ENCODE measurements at regions of chr12 and their contacts with region 1.

Region 1: DNA sequence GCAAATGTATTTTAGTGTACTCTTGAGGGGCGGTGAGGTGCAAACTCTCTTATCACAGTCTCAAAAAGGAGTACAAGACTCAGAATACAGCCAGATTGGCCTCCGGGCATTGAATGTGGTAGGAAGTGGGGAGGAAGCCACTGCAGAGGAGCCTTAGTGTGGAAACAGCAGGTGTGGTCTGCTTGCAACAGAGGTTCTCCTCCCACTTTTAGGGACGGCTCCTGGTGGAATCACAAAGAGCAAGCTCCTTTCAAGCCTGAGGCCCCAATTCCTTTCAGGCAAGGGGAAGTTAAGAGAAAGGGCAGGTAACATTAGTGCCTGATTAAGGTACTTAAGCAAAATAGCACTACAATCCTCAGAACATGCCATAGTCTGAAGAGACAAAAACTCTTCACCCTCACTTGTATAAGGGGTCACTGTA is 23.7 kb upstream of the SLC2A3 start:
- DNase-seq: peak; percentile 71
- H3K4me3 Mint-ChIP-seq: peak overlapping the region; percentile 86
- H3K27ac Mint-ChIP-seq: peak overlapping the region; percentile 88
- H3K4me1 Mint-ChIP-seq: peaks cover 48% of the 10 kb centered on the region
- H3K27me3 Mint-ChIP-seq: no peaks in the 10 kb centered on the region

Region 2: GRCh38 chr12:7656121-7656520 is 303.6 kb before region 1 on chr12:
- CTCF ChIA-PET with region 1: no interaction called
- POLR2A ChIA-PET with region 1: no interaction called
- DNase-seq: no peak
- H3K4me3 Mint-ChIP-seq: no peak overlapping the region
- H3K27ac Mint-ChIP-seq: no peak overlapping the region
- H3K4me1 Mint-ChIP-seq: no peaks in the 10 kb centered on the region
- H3K27me3 Mint-ChIP-seq: peaks cover 3% of the 10 kb centered on the region

Region 3: DNA sequence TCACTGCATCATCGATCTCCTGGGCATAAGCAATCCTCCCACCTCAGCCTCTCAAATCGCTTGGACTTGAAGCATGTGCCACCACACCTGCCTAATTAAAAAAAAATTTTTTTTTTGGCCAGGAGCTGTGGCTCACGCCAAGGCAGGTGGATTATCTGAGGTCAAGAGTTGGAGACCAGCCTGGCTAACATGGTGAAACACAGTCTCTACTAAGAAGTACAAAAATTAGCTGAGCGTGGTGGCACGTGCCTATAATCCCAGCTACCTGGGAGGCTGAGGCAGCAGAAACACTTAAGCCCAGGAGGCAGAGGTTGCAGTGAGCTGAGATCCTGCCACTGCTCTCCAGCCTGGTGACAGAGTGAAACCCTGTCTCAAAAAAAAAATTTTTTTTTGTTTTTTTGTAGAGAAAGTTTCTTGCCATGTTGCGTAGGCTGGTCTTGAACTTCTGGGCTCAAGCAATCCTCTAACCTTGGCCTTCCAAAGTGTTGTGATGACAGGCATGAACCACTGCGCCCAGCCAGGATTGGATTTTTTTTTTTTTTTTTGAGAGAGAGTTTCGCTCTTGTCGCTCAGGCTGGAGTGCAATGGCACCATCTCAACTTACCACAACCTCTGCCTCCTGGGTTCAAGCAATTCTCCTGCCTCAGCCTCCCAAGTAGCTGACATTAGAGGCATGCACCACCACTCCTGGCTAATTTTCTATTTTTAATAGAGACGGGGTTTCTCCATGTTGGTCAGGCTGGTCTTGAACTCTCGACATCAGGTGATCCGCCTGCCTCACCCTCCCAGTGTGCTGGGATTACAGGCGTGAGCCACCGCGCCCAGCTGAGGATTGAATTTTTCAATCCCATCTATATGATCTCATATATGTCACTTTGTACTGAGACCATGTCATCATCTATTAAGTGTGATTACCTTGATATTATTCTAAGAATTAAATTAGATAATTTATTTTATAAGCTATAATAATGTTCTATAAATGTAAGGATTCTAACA is 36.2 kb before region 1 on chr12:
- CTCF ChIA-PET with region 1: no interaction called
- POLR2A ChIA-PET with region 1: interaction called, 11 read pairs
- DNase-seq: no peak
- H3K4me3 Mint-ChIP-seq: no peak overlapping the region
- H3K27ac Mint-ChIP-seq: no peak overlapping the region
- H3K4me1 Mint-ChIP-seq: peaks cover 61% of the 10 kb centered on the region
- H3K27me3 Mint-ChIP-seq: no peaks in the 10 kb centered on the region

Region 4: GRCh38 chr12:7947011-7947699 is 12.6 kb before region 1 on chr12:
- CTCF ChIA-PET with region 1: interaction called, 3 read pairs
- POLR2A ChIA-PET with region 1: interaction called, 18 read pairs
- DNase-seq: no peak
- H3K4me3 Mint-ChIP-seq: no peak overlapping the region
- H3K27ac Mint-ChIP-seq: no peak overlapping the region
- H3K4me1 Mint-ChIP-seq: peaks cover 5% of the 10 kb centered on the region
- H3K27me3 Mint-ChIP-seq: no peaks in the 10 kb centered on the region

Region 5: GRCh38 chr12:7970475-7971252 is 11.0 kb after region 1 on chr12:
- CTCF ChIA-PET with region 1: interaction called, 44 read pairs
- POLR2A ChIA-PET with region 1: interaction called, 88 read pairs
- DNase-seq: peak; percentile 89
- H3K4me3 Mint-ChIP-seq: peak overlapping the region; percentile 84
- H3K27ac Mint-ChIP-seq: peak overlapping the region; percentile 100
- H3K4me1 Mint-ChIP-seq: peaks cover 39% of the 10 kb centered on the region
- H3K27me3 Mint-ChIP-seq: no peaks in the 10 kb centered on the region

Region 6: DNA sequence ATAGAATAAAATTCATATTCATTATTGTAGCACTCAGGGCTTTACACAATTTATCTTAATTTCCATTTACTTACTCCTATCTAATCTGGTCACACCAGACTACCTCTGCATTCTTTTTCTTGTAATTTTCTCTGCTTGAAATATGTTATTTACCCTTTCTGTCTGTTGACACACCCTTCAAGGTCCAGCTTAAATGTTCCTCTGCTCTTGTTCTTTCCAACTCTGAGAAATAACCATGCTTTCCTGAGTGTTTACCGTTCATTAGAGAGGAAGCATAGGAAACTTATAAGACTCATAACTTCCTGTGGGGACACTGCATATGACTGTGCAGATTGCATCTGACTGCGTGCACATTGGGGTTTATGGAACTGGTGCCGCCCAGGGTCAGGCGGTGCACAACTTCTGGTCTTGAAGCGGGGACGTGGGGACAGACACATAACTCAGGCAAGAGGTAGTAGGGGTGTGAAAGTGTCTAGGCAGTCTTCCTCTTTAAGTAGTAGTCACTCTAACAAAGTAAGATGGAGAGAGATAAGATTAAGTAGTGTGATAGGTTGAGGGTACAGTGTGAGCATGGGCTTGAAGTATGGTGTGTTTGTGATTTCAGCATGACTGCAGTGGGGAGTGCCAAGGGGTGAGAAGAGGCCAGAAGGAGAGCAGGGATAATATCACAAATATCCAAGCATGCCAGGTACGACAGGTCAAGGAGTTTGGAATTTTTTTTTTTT is 30.3 kb after region 1 on chr12:
- CTCF ChIA-PET with region 1: interaction called, 30 read pairs
- POLR2A ChIA-PET with region 1: interaction called, 38 read pairs
- DNase-seq: peak; percentile 88
- H3K4me3 Mint-ChIP-seq: peak overlapping the region; percentile 65
- H3K27ac Mint-ChIP-seq: peak overlapping the region; percentile 86
- H3K4me1 Mint-ChIP-seq: peaks cover 56% of the 10 kb centered on the region
- H3K27me3 Mint-ChIP-seq: no peaks in the 10 kb centered on the region

Region 7: GRCh38 chr12:7995266-7995963 is 35.7 kb after region 1 on chr12:
- CTCF ChIA-PET with region 1: interaction called, 30 read pairs
- POLR2A ChIA-PET with region 1: interaction called, 38 read pairs
- DNase-seq: peak; percentile 84
- H3K4me3 Mint-ChIP-seq: no peak overlapping the region
- H3K27ac Mint-ChIP-seq: no peak overlapping the region
- H3K4me1 Mint-ChIP-seq: peaks cover 26% of the 10 kb centered on the region
- H3K27me3 Mint-ChIP-seq: no peaks in the 10 kb centered on the region

Region 8: DNA sequence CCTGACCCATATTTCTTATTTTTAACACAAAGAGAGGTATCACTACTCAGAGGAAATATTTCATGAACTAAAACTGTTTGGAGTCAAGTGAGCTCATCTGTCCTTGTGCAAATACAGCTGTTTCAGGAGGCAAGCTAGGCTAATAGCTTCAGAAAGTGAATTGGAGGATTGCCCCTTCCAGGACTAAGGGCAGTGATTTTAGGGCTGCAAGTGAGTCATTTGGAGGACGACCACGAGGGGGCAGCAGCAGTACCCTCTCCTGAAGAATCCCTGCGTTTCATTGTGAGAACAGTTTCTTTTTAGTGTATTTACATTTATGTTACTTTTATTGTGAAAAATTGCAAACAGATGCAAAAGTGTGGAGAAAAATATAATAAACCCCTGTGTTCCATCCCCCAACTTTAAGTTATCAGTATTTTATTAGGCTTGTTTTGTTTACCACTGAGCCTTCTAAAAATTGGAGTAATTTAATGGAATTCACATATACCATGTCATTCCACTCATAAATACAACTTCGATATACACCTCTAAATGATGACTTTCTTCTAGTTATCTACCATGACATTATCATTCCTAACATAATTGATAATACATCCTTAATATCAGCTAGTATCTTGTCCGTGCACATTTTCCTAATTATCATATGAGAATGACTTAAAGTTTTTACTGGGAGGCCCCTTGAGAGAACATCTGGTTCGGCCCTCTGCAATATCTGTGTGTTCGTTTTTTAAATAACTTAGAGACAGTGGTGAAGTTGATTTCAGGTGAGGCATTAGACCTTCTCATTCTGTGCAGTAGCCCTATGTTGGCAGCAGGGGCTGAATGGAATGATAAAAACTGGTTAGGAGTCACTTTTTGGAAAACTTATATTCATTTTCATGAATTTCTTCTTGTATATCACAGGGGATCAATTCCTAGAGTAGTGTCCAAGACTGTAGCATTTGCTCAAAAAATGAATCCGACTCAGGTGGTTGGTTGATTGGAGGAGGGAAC is 86.5 kb after region 1 on chr12:
- CTCF ChIA-PET with region 1: no interaction called
- POLR2A ChIA-PET with region 1: no interaction called
- DNase-seq: peak; percentile 85
- H3K4me3 Mint-ChIP-seq: no peak overlapping the region
- H3K27ac Mint-ChIP-seq: no peak overlapping the region
- H3K4me1 Mint-ChIP-seq: peaks cover 29% of the 10 kb centered on the region
- H3K27me3 Mint-ChIP-seq: no peaks in the 10 kb centered on the region